OCI-LY7 (cell line): ENCODE measurements at regions of chr12 and their contacts with region 1.

Region 1: GRCh38 chr12:49288412-49288853 is 6.5 kb upstream of the PRPH start:
- DNase-seq: peak; percentile 64
- H3K4me3 ChIP-seq: no peak overlapping the region
- H3K27ac ChIP-seq: no peak overlapping the region
- H3K4me1 ChIP-seq: no peaks in the 10 kb centered on the region
- CTCF ChIP-seq: peak; percentile 98

Region 2: DNA sequence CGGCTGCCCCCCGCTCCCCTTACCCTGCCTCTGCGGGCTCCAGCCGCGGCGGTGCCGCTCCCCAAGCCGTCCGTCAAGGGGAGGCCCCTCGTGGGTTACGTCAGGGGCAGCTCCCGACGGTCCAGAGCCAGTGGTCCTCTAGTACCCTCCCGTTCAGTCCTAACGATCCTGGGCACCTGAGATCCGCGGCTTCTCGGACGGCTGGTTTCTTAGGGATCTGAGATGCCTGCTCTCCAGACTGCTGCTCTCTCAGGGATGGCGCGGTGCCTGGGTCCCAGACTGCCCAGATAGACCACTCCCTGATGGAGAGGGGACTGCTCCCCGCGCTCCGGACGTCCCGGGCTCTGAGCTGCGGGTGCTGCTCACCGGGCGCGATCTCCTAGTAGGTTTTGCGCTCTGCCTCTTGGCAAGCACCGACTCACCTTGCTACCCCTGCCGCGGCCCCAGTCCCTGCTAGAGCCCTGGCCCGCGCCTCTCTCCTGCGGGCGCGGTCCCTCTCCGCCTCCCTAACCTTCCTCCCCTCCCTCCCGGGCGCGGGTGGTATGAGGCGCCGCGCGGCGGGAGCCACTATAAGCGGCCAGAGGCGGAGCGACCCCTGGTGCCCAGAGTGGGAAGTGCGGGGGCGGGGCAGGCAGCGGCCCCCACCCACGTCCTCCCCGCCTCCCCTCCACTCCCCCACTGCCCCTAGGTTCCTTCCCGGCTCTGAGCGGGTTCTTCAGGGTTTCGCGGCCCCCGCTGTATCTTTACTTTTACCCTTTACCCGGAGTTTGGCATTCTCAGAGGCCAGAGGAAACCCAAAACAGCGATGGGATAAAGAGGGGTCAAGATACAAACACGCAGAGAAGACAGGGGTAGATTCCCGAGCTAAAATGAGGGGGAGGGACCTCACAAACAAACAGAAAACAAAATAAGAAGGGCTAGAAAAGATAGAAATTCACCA is 48.5 kb after region 1 on chr12 and contains the start of gene C1QL4:
- CTCF ChIA-PET with region 1: no interaction called
- POLR2A ChIA-PET with region 1: interaction called, 3 read pairs
- intact Hi-C with region 1: loop called (anchors 1 kb)
- DNase-seq: peak; percentile 82
- H3K4me3 ChIP-seq: peak within 1 kb of the TSS; percentile 60
- H3K27ac ChIP-seq: no peak within 1 kb of the TSS
- H3K4me1 ChIP-seq: peaks cover 11% of the 10 kb centered on the region
- CTCF ChIP-seq: peak; percentile 92
- total RNA-seq, gene C1QL4: 0.19 and 0.21 TPM in 2 replicates

Region 3: DNA sequence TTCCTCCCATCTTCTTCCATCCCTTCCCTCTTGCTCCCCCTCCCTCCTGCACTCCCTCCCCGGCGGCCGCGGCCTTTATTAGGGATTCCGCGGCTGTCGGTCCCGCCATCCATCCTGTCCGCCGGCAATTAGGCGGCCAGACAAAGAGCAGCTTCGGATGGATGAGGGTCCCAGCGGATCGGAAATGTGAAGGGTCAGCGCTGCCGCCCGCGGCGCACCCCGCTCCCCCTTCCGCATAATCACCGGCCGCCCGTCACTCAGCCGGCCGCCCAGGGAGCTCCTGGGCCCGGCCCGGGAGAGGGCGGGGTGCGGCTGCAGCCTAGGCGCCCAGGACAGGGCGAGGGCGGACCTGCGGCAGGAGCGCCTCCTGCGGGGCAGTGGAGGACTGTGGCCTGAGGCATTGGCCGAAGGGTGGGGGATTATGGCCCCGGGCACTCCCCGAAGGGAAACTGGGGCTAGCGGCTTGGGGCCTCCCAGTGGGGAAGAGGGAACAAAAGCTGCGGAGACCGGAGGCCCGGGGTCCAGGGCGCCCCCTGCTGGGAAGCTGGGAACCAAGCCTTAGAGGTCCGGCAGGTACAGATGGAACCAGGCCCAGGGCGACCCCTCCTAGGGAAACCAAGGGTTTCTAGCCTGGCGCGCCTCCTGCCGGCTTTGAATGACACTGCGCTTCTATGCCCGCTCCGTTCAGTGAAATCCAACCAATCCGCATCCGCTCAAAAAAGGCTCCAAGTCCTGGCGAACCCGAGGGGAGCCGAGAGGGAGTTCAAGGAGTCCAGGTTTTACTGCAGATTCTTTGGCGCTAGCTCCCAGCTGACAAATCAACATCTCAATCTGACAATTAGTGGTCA is 53.9 kb after region 1 on chr12:
- CTCF ChIA-PET with region 1: no interaction called
- POLR2A ChIA-PET with region 1: interaction called, 3 read pairs
- intact Hi-C with region 1: loop called (anchors 1 kb)
- DNase-seq: peak; percentile 93
- H3K4me3 ChIP-seq: peak overlapping the region; percentile 57
- H3K27ac ChIP-seq: no peak overlapping the region
- H3K4me1 ChIP-seq: peaks cover 51% of the 10 kb centered on the region
- CTCF ChIP-seq: peak; percentile 99

Region 4: DNA sequence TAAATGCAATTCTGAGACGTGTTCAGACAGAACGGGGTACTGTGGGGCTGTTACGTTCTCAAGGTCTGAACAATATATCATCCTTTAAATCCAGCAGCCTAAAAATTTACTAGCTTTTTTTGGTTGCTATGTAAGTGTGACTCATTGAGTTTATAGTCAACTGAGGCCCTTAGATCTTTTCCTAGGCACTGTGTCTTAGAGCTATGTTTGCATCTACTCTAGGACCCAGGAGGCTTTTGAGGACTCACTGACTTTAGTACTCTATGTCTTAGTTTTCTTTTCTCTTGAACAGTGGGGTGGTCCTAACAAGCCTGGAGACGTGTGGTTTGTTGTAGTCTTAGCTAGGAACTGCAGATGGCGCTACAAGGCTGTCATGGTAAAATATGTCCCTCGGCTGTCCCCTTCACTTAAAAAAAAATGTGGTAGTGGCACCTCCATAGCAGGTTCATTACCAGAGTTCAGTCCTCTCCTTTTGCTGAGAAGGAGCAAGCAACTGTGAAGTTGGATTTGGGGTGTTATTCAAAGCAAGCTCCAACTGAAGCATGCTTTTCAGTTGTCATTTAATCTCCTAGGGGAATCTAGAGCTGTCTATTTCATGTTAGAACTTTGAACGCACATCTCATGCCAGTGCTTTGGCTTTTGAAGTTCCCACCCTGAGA is 70.2 kb after region 1 on chr12:
- CTCF ChIA-PET with region 1: interaction called, 4 read pairs
- POLR2A ChIA-PET with region 1: no interaction called
- intact Hi-C with region 1: loop called (anchors 2 kb)
- DNase-seq: peak; percentile 86
- H3K4me3 ChIP-seq: no peak overlapping the region
- H3K27ac ChIP-seq: no peak overlapping the region
- H3K4me1 ChIP-seq: no peaks in the 10 kb centered on the region
- CTCF ChIP-seq: peak; percentile 98

Region 5: GRCh38 chr12:49515266-49515665 is 226.8 kb after region 1 on chr12:
- CTCF ChIA-PET with region 1: interaction called, 3 read pairs
- POLR2A ChIA-PET with region 1: no interaction called
- intact Hi-C with region 1: loop called (anchors 2 kb)
- DNase-seq: no peak
- H3K4me3 ChIP-seq: no peak overlapping the region
- H3K27ac ChIP-seq: no peak overlapping the region
- H3K4me1 ChIP-seq: no peaks in the 10 kb centered on the region
- CTCF ChIP-seq: no peak